ENCODE measurements at regions of chr7 and their contacts with region 1.

Region 1: DNA sequence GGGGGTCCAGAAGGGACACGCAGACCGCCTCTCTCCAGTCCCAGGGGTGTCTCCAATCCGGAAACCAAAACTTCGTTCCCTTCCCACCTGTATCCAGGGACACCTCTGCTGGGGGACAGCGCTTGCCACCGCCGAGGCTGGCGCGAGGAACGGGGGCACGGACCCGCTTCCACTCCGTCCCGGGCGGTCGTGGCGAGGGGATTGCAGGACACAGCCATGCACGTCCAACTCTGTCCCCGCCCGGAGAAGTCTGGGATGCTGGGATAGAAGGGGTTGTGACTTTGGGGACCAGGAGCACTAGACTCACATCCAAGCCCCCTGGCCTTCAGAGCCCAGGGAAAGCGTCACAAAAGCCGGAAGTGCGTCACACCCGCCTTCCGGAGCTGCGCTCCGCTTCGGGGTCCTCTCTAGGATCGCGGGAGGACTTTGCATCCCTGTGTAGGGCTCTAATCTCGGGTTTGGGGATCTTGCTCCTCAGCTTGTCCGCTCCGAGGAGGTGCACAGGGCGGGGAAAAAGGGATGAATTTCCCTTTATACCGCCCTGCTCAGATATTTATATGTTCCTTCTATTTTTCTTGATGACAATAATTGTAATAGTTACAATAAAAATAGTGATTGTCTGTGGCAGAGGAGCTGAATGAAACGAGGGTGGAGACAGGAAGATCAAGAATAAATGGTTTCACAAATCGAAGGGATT is at the start of gene FAM200A:
- DNase-seq: peak; percentile 75
- H3K4me3 Mint-ChIP-seq: peak within 1 kb of the TSS; percentile 90
- H3K27ac Mint-ChIP-seq: peak within 1 kb of the TSS; percentile 31
- H3K4me1 Mint-ChIP-seq: peaks cover 31% of the 10 kb centered on the region
- H3K27me3 Mint-ChIP-seq: no peaks in the 10 kb centered on the region
- total RNA-seq, gene FAM200A: 4.7 and 5.2 TPM in 2 replicates

Region 2: GRCh38 chr7:98864731-98865453 is 687.0 kb before region 1 on chr7:
- intact Hi-C with region 1: no loop called
- DNase-seq: no peak
- H3K4me3 Mint-ChIP-seq: no peak overlapping the region
- H3K27ac Mint-ChIP-seq: no peak overlapping the region
- H3K4me1 Mint-ChIP-seq: no peaks in the 10 kb centered on the region
- H3K27me3 Mint-ChIP-seq: peaks cover 35% of the 10 kb centered on the region

Region 3: GRCh38 chr7:99616359-99617191 is 64.7 kb after region 1 on chr7 and contains the start of gene ZSCAN25:
- intact Hi-C with region 1: loop called (anchors 1 kb)
- DNase-seq: peak; percentile 79
- H3K4me3 Mint-ChIP-seq: peak within 1 kb of the TSS; percentile 96
- H3K27ac Mint-ChIP-seq: peak within 1 kb of the TSS; percentile 94
- H3K4me1 Mint-ChIP-seq: peaks cover 56% of the 10 kb centered on the region
- H3K27me3 Mint-ChIP-seq: peaks cover 4% of the 10 kb centered on the region
- total RNA-seq, gene ZSCAN25: 31.5 and 32.9 TPM in 2 replicates